Vagina (tissue), 2 donors: ENCODE measurements at regions of chr11 and their contacts with region 1.

Region 1: DNA sequence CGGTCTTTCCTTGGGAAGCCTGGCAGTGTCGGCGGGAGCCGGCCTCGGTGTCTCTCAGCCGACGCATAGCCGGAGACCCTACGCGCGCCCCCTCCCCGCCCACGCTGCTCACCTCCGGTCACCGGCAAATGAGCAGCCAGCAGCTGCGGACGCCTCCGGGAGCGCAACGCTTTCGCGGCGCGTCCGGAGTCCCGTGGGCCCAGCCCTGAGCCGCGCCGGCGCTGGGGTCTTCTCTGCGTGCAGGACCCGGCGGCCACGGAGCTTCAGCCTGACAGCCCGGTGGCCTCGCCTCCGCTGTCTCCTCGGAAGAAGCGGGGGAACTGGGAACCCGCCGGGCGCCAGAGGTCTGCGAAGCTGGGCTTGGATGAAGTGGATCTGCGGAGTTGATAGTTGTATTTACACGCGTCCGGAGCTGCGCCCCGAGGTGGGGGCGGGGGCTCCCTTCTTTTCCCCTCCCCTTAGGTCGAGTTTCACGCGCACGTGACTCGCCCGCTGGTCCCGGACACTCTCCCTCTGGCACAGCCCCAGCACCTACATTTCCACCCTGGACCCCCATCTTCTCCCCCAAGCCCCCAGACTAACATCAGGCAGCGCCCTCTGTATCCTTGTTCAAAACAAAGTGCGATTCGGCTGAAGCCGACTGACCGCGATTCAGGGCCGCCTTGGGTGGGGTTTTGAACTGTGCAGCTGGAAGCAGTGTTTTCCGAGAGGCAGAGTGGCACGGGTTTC is at the start of gene SLC43A1:
- DNase-seq: no peak
- H3K4me3 ChIP-seq: peak within 1 kb of the TSS; percentile 75 to 85
- H3K27ac ChIP-seq: peak within 1 kb of the TSS; percentile 57
- H3K4me1 ChIP-seq: peaks cover 24% of the 10 kb centered on the region
- H3K27me3 ChIP-seq: no peaks in the 10 kb centered on the region
- CTCF ChIP-seq: no peak
- POLR2A ChIP-seq: peak in 1 of 2 donors; percentile 9
- total RNA-seq, gene SLC43A1: 22.6 TPM

Region 2: GRCh38 chr11:57288771-57289579 is 226.5 kb before region 1 on chr11:
- intact Hi-C with region 1: no loop called
- DNase-seq: no peak
- H3K4me3 ChIP-seq: no peak overlapping the region
- H3K27ac ChIP-seq: peak overlapping the region; percentile 15
- H3K4me1 ChIP-seq: peaks cover 15% of the 10 kb centered on the region
- H3K27me3 ChIP-seq: no peaks in the 10 kb centered on the region
- CTCF ChIP-seq: no peak
- POLR2A ChIP-seq: no peak

Region 3: GRCh38 chr11:57463671-57464538 is 51.6 kb before region 1 on chr11:
- intact Hi-C with region 1: loop called (anchors 2 kb)
- DNase-seq: no peak
- H3K4me3 ChIP-seq: no peak overlapping the region
- H3K27ac ChIP-seq: no peak overlapping the region
- H3K4me1 ChIP-seq: peaks cover 23% of the 10 kb centered on the region
- H3K27me3 ChIP-seq: no peaks in the 10 kb centered on the region
- CTCF ChIP-seq: no peak
- POLR2A ChIP-seq: no peak

Region 4: DNA sequence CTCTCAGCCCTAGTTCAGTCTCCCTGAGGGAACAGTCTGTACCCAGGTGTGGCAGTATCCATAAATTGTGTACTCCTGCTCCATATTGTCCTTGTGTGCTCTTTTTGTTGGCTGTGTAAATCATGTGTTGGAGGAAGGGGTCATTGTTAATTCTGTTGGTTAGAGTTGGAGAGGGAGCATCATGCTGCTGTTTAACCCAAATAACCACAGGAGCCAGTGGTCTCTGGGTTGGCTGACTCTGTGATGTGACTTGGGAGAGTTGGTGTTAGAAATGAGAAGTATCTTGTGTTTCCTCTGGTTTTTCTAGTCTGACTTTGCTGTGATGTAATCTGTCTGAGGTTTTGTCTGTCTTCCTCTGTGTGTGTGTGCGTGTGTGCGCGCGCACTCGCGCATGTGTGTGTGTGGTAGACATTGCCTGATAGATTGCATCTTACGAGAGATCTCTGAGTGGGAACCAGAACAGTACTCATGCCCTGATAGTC is 276.6 kb after region 1 on chr11:
- intact Hi-C with region 1: no loop called
- DNase-seq: no peak
- H3K4me3 ChIP-seq: no peak overlapping the region
- H3K27ac ChIP-seq: peak overlapping the region; percentile 59
- H3K4me1 ChIP-seq: peaks cover 79% of the 10 kb centered on the region
- H3K27me3 ChIP-seq: no peaks in the 10 kb centered on the region
- CTCF ChIP-seq: no peak
- POLR2A ChIP-seq: no peak